Sigmoid colon (tissue), 7 donors: ENCODE measurements at regions of chr4 and their contacts with region 1.

Region 1: DNA sequence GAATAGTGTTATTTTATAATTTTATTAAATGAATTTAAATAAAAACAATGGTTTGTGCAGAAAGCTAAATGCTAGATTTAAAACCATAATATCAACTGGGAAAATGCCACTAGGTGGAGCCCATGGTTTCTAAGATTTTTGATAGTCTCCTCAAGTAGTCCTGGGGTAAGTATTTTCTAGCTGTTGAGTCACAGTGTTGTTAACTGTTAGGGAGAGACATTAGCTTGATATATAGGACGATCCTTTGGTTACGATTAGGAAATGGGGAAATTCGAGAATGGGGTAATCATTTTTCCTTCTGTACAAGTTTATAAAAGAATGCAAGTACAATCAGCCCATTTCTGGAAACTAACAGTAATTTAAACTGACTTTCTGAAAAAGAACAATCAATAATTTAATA is 378.4 kb downstream of the ANKRD50 start:
- DNase-seq: no peak
- H3K4me3 ChIP-seq: no peak overlapping the region
- H3K27ac ChIP-seq: no peak overlapping the region
- H3K4me1 ChIP-seq: peaks cover 0 to 2% (median under 1%) of the 10 kb centered on the region in 4 donors
- H3K27me3 ChIP-seq: no peaks in the 10 kb centered on the region
- CTCF ChIP-seq: peak in 3 of 4 experiments; percentile 47 to 56 (median 50)
- EP300 ChIP-seq: no peak
- POLR2A ChIP-seq: no peak

Region 2: GRCh38 chr4:124712372-124713184 is 378.5 kb after region 1 on chr4 and contains the start of gene ANKRD50:
- intact Hi-C with region 1: loop called (anchors 5 kb)
- DNase-seq: peak; percentile 95
- H3K4me3 ChIP-seq: peak within 1 kb of the TSS; percentile 62 to 94 (median 87)
- H3K27ac ChIP-seq: peak within 1 kb of the TSS; percentile 88 to 98 (median 96)
- H3K4me1 ChIP-seq: peaks cover 0 to 38% (median 22%) of the 10 kb centered on the region in 4 donors
- H3K27me3 ChIP-seq: no peaks in the 10 kb centered on the region
- CTCF ChIP-seq: no peak
- EP300 ChIP-seq: peak in 1 of 4 donors; percentile 49
- POLR2A ChIP-seq: peak; percentile 64 to 65
- total RNA-seq, gene ANKRD50: 12.5 to 24.9 (median 14.9) TPM

Region 3: GRCh38 chr4:125244848-125245450 is 910.8 kb after region 1 on chr4:
- intact Hi-C with region 1: loop called (anchors 2 kb)
- DNase-seq: no peak
- H3K4me3 ChIP-seq: no peak overlapping the region
- H3K27ac ChIP-seq: no peak overlapping the region
- H3K4me1 ChIP-seq: peaks cover 0 to 6% (median 4%) of the 10 kb centered on the region in 4 donors
- H3K27me3 ChIP-seq: no peaks in the 10 kb centered on the region
- CTCF ChIP-seq: peak in 2 of 4 experiments; percentile 9 to 31
- EP300 ChIP-seq: no peak
- POLR2A ChIP-seq: no peak

Region 4: DNA sequence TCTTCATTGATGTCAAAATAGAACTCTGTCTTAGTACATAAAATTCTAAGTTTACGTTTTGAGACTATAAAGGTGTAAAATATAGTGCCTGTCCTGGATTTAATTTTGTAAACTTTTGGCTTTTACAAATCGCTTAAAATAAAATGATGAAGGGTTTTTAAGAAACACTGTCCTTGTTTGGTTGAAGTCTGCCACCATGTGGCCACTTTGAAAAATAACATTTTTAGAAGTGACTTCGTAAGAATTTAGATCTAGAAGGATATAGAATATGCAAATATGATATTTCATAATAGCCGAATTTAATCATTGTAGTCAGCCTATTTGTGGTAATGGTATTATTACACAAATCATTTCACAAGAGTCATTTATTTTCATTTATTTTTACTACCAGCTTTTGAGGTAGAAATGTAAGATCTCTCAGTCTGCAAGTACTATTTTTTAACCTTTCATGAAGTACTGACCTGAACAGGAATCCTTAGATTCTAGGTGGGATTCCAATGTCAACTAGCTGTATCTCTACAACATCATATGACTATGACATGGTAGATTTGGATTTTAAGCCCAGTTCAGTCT is 949.7 kb after region 1 on chr4:
- intact Hi-C with region 1: loop called (anchors 1 kb)
- DNase-seq: no peak
- H3K4me3 ChIP-seq: no peak overlapping the region
- H3K27ac ChIP-seq: no peak overlapping the region
- H3K4me1 ChIP-seq: no peaks in the 10 kb centered on the region
- H3K27me3 ChIP-seq: no peaks in the 10 kb centered on the region
- CTCF ChIP-seq: peak in 3 of 4 experiments; percentile 6 to 54 (median 25)
- EP300 ChIP-seq: no peak
- POLR2A ChIP-seq: no peak